Activated CD4-positive, alpha-beta T cell treated with anti-CD3 and anti-CD28 coated beads, Interleukin-2, amount 10 ng/mL, durations not matched to agents 24 days and 14 days (primary cell): ENCODE measurements at regions of chr7 and their contacts with region 1.

Region 1: DNA sequence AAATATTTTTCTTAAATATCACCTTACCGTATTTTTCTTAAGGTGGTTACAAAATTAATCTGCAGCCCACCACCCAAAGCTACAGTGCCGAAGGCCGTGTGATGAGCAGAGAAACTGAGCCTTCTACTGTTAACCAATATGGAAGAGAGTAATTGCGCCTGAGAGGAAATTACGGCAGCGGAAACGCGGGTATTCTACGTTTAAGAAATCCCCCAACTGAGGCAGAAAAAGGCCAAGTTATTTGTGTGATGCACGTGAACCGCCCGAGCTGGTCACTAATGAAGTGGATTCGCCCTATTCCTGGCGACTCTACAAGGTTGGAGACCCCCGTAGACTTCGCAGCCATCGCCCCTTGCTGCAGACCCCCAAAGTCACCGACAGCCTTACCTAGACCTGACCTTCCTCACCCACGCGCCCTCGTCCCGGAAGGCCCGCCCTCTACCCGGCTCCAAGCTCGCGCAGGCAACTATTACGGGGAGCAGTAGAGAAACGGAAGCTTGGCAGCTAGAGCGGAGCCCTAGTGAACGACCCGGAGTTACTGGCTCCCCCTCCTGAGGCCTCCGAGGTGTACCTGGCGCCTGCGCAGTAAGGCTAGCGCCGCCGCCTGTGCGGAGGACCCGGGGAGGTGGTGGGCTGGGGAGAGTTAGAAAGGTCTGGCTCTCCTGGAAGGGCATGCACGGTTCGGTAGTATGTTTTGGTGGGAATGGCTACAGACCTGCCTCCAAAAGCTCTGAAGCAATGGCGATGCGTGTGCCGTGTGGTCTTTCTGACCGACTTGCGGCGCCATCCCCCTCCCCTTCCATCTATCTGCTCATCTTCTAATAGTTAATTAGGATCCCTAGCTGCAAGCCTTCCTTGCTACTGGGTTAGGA is at the start of gene MRPS33:
- DNase-seq: peak; percentile 98
- H3K4me3 Mint-ChIP-seq: peak within 1 kb of the TSS; percentile 99
- H3K27ac Mint-ChIP-seq: peak within 1 kb of the TSS; percentile 100
- H3K4me1 Mint-ChIP-seq: peaks cover 30% of the 10 kb centered on the region
- H3K27me3 Mint-ChIP-seq: peaks cover 19% of the 10 kb centered on the region
- total RNA-seq, gene MRPS33: 73.0 and 74.2 TPM in 2 replicates

Region 2: GRCh38 chr7:139340037-139340807 is 1674.5 kb before region 1 on chr7:
- intact Hi-C with region 1: loop called (anchors 10 kb)
- DNase-seq: peak; percentile 99
- H3K4me3 Mint-ChIP-seq: peak overlapping the region; percentile 91
- H3K27ac Mint-ChIP-seq: peak overlapping the region; percentile 93
- H3K4me1 Mint-ChIP-seq: peaks cover 19% of the 10 kb centered on the region
- H3K27me3 Mint-ChIP-seq: peaks cover 4% of the 10 kb centered on the region

Region 3: DNA sequence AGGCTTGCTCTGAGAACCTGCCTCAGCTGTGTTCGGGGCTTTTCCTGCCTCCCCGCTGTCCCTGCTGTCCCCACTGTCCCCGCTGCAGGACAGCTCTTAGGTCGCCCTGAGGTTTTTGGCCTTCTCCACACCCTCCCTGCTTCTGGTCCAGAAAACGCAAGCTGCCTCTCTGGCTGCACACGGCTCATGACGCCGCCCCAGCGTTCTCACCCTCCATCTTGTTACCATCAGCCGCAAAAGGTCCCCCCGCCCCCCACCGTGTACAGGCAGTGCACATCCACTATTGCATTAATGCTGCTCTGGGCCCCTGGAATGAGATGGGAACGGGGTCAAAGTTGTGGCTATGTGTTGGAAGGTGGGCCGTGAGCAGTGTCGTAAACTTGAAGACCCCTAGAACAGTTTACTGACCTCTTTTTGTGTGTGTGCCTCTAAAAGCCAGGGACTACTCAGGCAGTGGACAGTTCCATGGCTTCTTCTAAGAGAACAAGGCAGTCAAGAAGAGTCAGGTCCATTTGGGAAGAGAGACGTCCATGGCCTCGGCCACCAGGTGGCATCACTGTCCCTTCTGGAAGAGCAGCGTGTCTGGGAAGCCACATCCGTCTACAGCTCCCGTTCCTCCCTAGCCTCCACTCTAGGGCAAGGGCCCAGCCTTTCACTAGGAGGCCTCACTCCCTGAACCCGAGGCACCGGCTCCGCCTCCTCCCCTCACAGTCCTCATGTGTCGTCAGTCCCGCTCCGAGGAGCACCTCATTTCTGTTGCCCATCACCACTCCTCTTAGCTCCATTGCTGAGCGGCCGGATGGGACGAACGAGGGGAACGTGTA is 497.0 kb before region 1 on chr7:
- intact Hi-C with region 1: loop called (anchors 1 kb)
- DNase-seq: peak; percentile 89
- H3K4me3 Mint-ChIP-seq: no peak overlapping the region
- H3K27ac Mint-ChIP-seq: no peak overlapping the region
- H3K4me1 Mint-ChIP-seq: peaks cover 2% of the 10 kb centered on the region
- H3K27me3 Mint-ChIP-seq: peaks cover 9% of the 10 kb centered on the region

Region 4: DNA sequence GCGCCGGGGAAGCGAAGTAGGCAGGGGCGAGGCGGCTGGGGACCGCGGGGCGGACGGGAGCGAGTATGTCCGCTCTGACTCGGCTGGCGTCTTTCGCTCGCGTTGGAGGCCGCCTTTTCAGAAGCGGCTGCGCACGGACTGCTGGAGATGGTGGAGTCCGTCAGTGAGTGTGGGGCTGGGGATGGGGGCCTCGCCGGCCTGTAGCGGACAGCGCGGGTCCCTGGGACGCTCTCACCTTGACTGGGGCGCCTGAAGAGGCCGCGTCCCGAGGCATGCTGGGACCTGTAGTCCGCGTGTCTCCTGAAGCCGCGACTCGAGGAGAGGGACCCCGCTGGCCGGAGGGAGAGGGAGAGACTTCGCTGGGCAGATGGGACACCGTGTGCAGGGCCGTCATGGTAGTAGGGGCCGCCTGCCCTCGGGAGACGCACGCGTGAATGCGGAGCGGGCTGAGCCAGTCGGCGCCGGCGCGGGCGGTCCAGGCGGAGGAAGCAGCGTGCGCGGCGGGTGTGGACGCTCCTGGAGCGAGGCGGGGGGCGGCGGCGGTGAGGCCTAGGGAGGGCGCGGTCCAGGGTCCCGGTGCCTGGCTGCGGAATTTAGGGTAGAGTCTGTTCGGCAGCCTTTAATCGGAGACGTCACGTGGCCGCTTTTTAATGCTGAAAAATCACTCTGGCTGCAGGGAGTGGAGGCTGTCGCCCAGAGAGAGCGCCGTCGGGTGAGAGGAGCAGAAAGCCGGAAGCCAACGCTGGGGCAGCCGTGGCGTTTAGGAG is 317.9 kb before region 1 on chr7 and contains the start of gene NDUFB2:
- intact Hi-C with region 1: loop called (anchors 1 kb)
- DNase-seq: peak; percentile 97
- H3K4me3 Mint-ChIP-seq: peak within 1 kb of the TSS; percentile 99
- H3K27ac Mint-ChIP-seq: peak within 1 kb of the TSS; percentile 99
- H3K4me1 Mint-ChIP-seq: peaks cover 27% of the 10 kb centered on the region
- H3K27me3 Mint-ChIP-seq: no peaks in the 10 kb centered on the region
- total RNA-seq, gene NDUFB2: 183 and 192 TPM in 2 replicates

Region 5: DNA sequence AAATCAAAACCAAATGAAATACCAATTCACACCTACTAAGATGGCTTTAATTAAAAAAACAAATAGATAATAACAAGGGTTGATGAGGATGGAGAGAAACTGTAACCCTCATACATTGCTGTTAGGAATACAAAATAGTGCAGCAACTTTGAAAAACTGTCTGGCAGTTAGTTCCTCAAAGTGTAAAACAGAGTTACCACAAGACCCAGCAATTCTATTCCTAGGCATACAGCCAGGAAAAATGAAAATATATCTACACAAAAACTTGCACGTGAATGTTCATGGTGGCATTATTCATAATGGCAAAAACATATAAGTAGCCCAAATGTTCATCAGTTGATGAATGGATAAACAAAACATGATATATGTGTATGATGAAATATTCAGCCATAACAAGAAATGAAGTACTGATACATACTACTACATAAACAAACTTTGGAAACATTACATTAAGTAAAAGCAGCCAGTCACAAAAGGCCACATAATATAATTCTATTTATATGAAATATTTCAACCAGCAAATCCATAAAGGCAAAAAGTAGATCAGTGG is 173.5 kb before region 1 on chr7:
- intact Hi-C with region 1: no loop called
- DNase-seq: no peak
- H3K4me3 Mint-ChIP-seq: no peak overlapping the region
- H3K27ac Mint-ChIP-seq: no peak overlapping the region
- H3K4me1 Mint-ChIP-seq: no peaks in the 10 kb centered on the region
- H3K27me3 Mint-ChIP-seq: no peaks in the 10 kb centered on the region

Region 6: DNA sequence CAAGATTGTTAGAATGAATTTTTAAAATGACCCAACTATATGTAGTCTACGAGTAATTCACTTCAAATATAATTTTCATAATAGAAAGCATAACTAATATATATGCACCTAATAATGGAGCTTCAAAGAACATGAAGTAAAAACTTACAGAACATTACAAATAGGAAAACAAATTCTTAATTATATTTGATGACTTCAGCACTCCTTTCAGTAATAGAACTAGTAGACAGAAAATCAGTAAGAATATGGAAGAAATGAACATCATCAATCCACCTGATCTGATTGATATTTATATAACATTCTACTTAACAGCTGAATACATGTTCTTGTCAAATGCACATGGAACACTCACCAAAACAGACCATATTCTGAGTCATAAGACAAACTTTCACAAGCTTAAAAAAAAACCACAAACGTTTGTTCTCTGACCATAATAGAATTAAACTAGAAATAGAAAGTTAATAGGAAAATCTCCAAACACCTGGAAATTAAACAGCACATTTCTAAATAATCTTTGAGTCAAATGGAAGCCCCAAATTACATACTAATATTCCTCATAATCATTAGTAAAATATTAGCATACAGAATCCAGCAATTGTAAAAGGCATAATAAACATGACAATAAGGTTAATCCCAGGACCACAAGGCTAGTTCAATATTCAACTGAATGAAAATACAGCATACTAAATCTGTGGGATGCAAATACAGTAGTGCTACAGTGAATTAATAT is 138.1 kb before region 1 on chr7:
- intact Hi-C with region 1: loop called (anchors 2 kb)
- DNase-seq: no peak
- H3K4me3 Mint-ChIP-seq: no peak overlapping the region
- H3K27ac Mint-ChIP-seq: no peak overlapping the region
- H3K4me1 Mint-ChIP-seq: peaks cover 21% of the 10 kb centered on the region
- H3K27me3 Mint-ChIP-seq: peaks cover 2% of the 10 kb centered on the region

Region 7: GRCh38 chr7:140972876-140973859 is 41.6 kb before region 1 on chr7:
- intact Hi-C with region 1: no loop called
- DNase-seq: no peak
- H3K4me3 Mint-ChIP-seq: no peak overlapping the region
- H3K27ac Mint-ChIP-seq: no peak overlapping the region
- H3K4me1 Mint-ChIP-seq: peaks cover 4% of the 10 kb centered on the region
- H3K27me3 Mint-ChIP-seq: peaks cover 15% of the 10 kb centered on the region

Region 8: GRCh38 chr7:141072548-141073172 is 57.9 kb after region 1 on chr7:
- intact Hi-C with region 1: loop called (anchors 2 kb)
- DNase-seq: peak; percentile 82
- H3K4me3 Mint-ChIP-seq: peak overlapping the region; percentile 83
- H3K27ac Mint-ChIP-seq: no peak overlapping the region
- H3K4me1 Mint-ChIP-seq: peaks cover 19% of the 10 kb centered on the region
- H3K27me3 Mint-ChIP-seq: peaks cover 43% of the 10 kb centered on the region

Region 9: GRCh38 chr7:141097430-141097829 is 82.7 kb after region 1 on chr7:
- intact Hi-C with region 1: no loop called
- DNase-seq: peak; percentile 59
- H3K4me3 Mint-ChIP-seq: no peak overlapping the region
- H3K27ac Mint-ChIP-seq: no peak overlapping the region
- H3K4me1 Mint-ChIP-seq: no peaks in the 10 kb centered on the region
- H3K27me3 Mint-ChIP-seq: no peaks in the 10 kb centered on the region

Region 10: DNA sequence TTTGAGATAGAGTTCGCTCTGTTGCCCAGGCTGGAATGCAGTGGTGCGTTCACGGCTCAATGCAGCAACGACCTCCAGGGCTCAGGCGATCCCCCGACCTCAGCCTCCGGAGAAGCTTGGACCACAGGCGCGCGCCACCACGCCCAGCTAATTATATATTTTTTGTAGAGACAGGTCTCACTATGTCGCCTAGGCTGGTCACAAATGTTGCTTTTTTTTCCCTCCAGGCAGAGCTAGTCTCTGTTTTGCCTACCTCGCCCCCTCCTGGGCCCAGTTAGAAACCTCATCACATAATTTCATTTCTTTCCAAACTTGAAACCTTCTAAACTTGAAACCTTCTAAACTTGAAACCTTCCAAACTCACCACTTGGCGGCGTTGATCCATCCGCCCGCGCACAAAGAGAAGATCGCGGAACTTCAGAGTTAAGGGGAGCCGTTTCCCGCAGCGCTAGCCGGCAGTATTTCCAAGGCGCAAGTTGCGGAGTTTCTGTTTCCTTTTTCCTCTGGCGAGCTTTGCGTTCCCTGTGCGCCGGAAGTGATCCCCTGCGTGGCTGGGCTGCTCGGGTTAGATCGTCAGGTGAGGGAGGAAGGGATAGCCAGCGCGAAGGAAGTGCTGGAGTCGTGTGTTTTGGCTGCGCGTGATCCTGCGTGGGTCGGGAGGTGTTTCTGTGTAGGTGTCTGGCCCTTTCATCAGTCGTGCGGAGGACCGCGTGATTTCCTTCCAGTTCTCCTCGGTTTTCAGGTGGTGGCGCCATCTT is 723.3 kb after region 1 on chr7 and contains the start of gene SSBP1:
- intact Hi-C with region 1: loop called (anchors 1 kb)
- DNase-seq: peak; percentile 98
- H3K4me3 Mint-ChIP-seq: peak within 1 kb of the TSS; percentile 99
- H3K27ac Mint-ChIP-seq: peak within 1 kb of the TSS; percentile 99
- H3K4me1 Mint-ChIP-seq: peaks cover 29% of the 10 kb centered on the region
- H3K27me3 Mint-ChIP-seq: peaks cover 5% of the 10 kb centered on the region
- total RNA-seq, gene SSBP1: 264 and 266 TPM in 2 replicates